ENCODE measurements at regions of chrX and their contacts with region 1.

Region 1: GRCh38 chrX:143047511-143047910 is 21.8 kb downstream of the SPANXN4 start:
- DNase-seq: no peak
- ATAC-seq: no peak

Region 2: DNA sequence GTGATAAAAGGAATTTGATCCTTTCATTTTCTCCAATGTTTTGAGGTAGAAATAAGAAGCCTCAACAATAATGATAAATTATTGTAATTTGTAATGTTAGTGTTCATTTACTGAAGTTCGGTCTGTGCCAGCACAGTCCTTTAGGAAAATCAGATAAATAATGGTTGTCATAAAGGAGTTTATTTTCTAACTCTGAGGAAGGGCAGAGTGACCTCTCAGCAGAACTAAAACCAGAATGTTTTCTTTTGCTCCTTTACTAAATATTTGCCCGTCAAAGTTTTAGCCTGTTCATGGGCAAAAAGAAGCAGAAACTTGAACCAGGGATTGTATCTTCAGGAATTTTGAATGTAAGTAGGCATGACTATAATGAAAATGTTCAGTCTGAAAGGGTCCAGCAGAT is 114.5 kb before region 1 on chrX:
- intact Hi-C with region 1: no loop called
- DNase-seq: no peak
- ATAC-seq: no peak

Region 3: DNA sequence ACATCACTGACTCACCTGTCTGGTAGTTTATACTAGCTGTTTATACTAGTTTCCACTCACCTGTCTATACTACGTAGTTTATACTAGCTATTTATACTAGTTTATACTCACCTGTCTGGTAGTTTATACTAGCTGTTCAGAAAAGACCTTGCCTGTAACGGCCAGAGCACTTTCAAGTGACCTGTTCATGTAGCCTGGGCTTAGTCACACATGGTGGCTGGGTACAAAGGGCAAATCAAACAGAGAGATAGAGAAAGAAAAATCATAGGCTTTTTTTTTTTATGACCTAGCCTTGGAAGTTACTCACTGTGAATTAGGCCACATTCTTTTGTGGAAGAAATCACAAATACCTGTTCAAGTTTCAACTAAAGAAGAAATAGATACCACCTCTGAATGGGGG is 52.5 kb before region 1 on chrX:
- intact Hi-C with region 1: loop called in 1 of 2 experiments (anchors 5 kb)
- DNase-seq: no peak
- ATAC-seq: no peak

Region 4: GRCh38 chrX:143270317-143270716 is 222.8 kb after region 1 on chrX:
- intact Hi-C with region 1: no loop called
- DNase-seq: no peak
- ATAC-seq: no peak